T-cell (primary cell): ENCODE measurements at regions of chr9 and their contacts with region 1.

Region 1: GRCh38 chr9:79610791-79611614 is 39.2 kb downstream of the TLE4 start:
- DNase-seq: no peak
- ATAC-seq: no peak
- H3K4me3 ChIP-seq: no peak overlapping the region
- H3K4me3 Mint-ChIP-seq: no peak overlapping the region
- H3K27ac ChIP-seq: no peak overlapping the region
- H3K27ac Mint-ChIP-seq: peak overlapping the region in 1 of 2 donors; percentile 17
- H3K4me1 ChIP-seq: no peaks in the 10 kb centered on the region
- H3K4me1 Mint-ChIP-seq: peaks cover 59 to 70% (median 61%) of the 10 kb centered on the region in 3 donors
- H3K27me3 ChIP-seq: no peaks in the 10 kb centered on the region
- H3K27me3 Mint-ChIP-seq: no peaks in the 10 kb centered on the region

Region 2: DNA sequence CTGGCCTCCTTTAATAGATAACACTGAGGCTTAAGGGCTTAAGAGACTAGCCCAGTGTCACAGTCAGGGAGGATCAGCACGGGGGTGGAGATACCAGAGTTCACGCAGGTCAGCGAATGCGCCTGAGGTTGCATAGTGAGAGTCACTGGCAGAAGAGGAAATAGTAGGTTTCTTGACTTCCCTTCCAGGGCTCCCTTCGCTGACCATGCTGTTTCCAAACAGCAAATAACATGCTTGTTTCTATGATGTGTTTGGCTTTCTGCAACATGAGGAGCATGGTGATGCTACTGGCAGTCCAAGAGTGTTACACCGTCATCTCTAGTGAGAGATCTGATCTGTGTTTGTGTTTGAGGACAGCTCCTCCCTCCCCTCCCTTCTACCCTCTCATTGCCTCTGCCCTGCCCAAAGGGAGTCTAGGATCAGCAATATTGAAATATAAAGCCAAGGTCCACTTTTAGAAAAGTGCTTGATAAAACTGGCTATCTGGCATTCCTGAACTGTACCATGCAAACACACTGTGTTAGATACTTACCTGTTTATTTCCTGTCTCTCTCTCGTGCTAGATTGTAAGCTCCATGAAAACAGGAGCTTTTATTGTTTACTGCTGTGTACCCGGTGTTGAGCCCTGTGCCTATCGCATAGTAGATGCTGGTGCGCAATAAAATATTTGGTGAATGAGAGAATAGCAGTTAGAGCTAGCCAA is 26.9 kb before region 1 on chr9:
- CTCF ChIA-PET with region 1: no interaction called
- POLR2A ChIA-PET with region 1: interaction called in 1 of 2 experiments, 15 read pairs
- DNase-seq: peak in 26 of 35 experiments; percentile 9 to 52 (median 23)
- ATAC-seq: peak; percentile 15 to 62 (median 43)
- H3K4me3 ChIP-seq: no peak overlapping the region
- H3K4me3 Mint-ChIP-seq: peak overlapping the region; percentile 25 to 54 (median 31)
- H3K27ac ChIP-seq: no peak overlapping the region
- H3K27ac Mint-ChIP-seq: peak overlapping the region; percentile 68 to 77
- H3K4me1 ChIP-seq: peaks cover 29 to 31% of the 10 kb centered on the region in 2 experiments
- H3K4me1 Mint-ChIP-seq: peaks cover 75 to 87% (median 84%) of the 10 kb centered on the region in 3 donors
- H3K27me3 ChIP-seq: no peaks in the 10 kb centered on the region
- H3K27me3 Mint-ChIP-seq: no peaks in the 10 kb centered on the region